ENCODE measurements at regions of chr3 and their contacts with region 1.

Region 1: GRCh38 chr3:110521019-110521418 is 550.6 kb upstream of the NECTIN3 start:
- DNase-seq: peak; percentile 97
- H3K4me3 ChIP-seq: no peak overlapping the region
- H3K27ac ChIP-seq: peak overlapping the region; percentile 76
- H3K4me1 ChIP-seq: peaks cover 18% of the 10 kb centered on the region
- H3K27me3 ChIP-seq: no peaks in the 10 kb centered on the region
- CTCF ChIP-seq: no peak
- POLR2A ChIP-seq: no peak

Region 2: DNA sequence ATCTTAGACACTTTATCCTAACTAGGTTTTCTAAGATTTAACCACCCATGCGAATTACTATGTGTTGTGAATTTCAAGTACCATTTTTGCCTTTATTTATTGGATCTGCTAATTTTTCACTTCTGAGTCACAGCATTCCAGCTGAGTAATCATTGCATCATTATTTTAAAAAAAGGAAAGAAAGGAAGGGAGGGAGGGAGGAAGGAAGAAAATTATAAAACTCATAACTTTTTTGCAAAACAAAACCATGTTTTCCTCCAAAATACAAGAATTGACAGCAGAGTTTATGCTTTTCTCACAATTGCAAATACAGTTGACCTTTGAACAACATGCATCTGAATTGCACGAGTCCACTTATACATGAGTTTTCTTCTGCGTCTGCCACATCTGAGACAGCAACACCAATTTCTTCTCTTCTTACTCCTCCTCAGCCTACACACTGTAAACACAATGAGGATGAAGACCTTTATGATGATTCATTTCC is 100.8 kb before region 1 on chr3:
- CTCF ChIA-PET with region 1: interaction called, 4 read pairs
- POLR2A ChIA-PET with region 1: no interaction called
- dilution Hi-C with region 1: no loop called
- intact Hi-C with region 1: loop called (anchors 1 kb)
- DNase-seq: peak; percentile 94
- H3K4me3 ChIP-seq: peak overlapping the region in 1 of 3 experiments; percentile 5
- H3K27ac ChIP-seq: peak overlapping the region; percentile 92
- H3K4me1 ChIP-seq: peaks cover 32% of the 10 kb centered on the region
- H3K27me3 ChIP-seq: no peaks in the 10 kb centered on the region
- CTCF ChIP-seq: no peak
- POLR2A ChIP-seq: no peak

Region 3: GRCh38 chr3:110576962-110577361 is 55.9 kb after region 1 on chr3:
- CTCF ChIA-PET with region 1: interaction called, 3 read pairs
- POLR2A ChIA-PET with region 1: no interaction called
- dilution Hi-C with region 1: no loop called
- intact Hi-C with region 1: loop called (anchors 2 kb)
- DNase-seq: peak; percentile 65
- H3K4me3 ChIP-seq: no peak overlapping the region
- H3K27ac ChIP-seq: peak overlapping the region; percentile 60
- H3K4me1 ChIP-seq: peaks cover 11% of the 10 kb centered on the region
- H3K27me3 ChIP-seq: no peaks in the 10 kb centered on the region
- CTCF ChIP-seq: no peak
- POLR2A ChIP-seq: no peak

Region 4: DNA sequence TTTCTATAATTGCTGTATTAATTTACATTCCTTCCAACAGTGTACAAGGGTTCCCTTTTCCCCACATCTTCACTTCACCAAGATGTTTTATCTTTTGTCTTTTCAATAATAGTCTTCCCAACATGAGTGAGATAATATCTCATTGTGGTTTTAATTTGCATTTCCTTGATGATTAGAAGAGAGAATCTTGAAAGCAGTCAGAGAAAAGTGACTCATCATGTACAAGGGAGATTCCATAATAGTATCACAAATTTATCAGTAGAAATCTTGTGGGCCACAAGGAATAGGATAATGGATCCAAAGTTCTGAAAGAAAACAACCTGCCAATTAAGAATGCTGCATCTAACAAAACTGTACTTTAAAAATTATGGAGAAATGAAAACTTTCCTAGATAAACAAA is 739.9 kb after region 1 on chr3:
- CTCF ChIA-PET with region 1: no interaction called
- POLR2A ChIA-PET with region 1: no interaction called
- dilution Hi-C with region 1: no loop called
- intact Hi-C with region 1: no loop called
- DNase-seq: no peak
- H3K4me3 ChIP-seq: no peak overlapping the region
- H3K27ac ChIP-seq: no peak overlapping the region
- H3K4me1 ChIP-seq: no peaks in the 10 kb centered on the region
- H3K27me3 ChIP-seq: no peaks in the 10 kb centered on the region
- CTCF ChIP-seq: no peak
- POLR2A ChIP-seq: no peak

Measured in endothelial cell of umbilical vein (primary cell).